Esophagus muscularis mucosa (tissue), 4 donors: ENCODE measurements at regions of chrX and their contacts with region 1.

Region 1: GRCh38 chrX:15789979-15790768 is at the start of gene ZRSR2:
- DNase-seq: peak; percentile 94
- H3K4me3 ChIP-seq: peak within 1 kb of the TSS; percentile 62 to 82 (median 76)
- H3K27ac ChIP-seq: peak within 1 kb of the TSS; percentile 81 to 85 (median 82)
- H3K4me1 ChIP-seq: peaks cover 18 to 30% (median 23%) of the 10 kb centered on the region in 4 donors
- H3K27me3 ChIP-seq: no peaks in the 10 kb centered on the region
- CTCF ChIP-seq: no peak
- EP300 ChIP-seq: no peak
- POLR2A ChIP-seq: peak; percentile 31
- total RNA-seq, gene ZRSR2: 7.0 to 12.4 (median 9.0) TPM

Region 2: GRCh38 chrX:15674841-15675489 is 115.2 kb before region 1 on chrX:
- intact Hi-C with region 1: loop called (anchors 5 kb)
- DNase-seq: peak; percentile 96
- H3K4me3 ChIP-seq: peak overlapping the region; percentile 60 to 88 (median 79)
- H3K27ac ChIP-seq: peak overlapping the region; percentile 92 to 99 (median 94)
- H3K4me1 ChIP-seq: peaks cover 14 to 29% (median 17%) of the 10 kb centered on the region in 4 donors
- H3K27me3 ChIP-seq: no peaks in the 10 kb centered on the region
- CTCF ChIP-seq: no peak
- EP300 ChIP-seq: no peak
- POLR2A ChIP-seq: peak; percentile 59

Region 3: GRCh38 chrX:15854712-15855567 is 64.8 kb after region 1 on chrX and contains the start of gene AP1S2:
- intact Hi-C with region 1: loop called (anchors 5 kb)
- DNase-seq: peak; percentile 94
- H3K4me3 ChIP-seq: peak within 1 kb of the TSS; percentile 75 to 93 (median 80)
- H3K27ac ChIP-seq: peak within 1 kb of the TSS; percentile 88 to 96 (median 95)
- H3K4me1 ChIP-seq: peaks cover 12 to 41% (median 28%) of the 10 kb centered on the region in 4 donors
- H3K27me3 ChIP-seq: no peaks in the 10 kb centered on the region
- CTCF ChIP-seq: no peak
- EP300 ChIP-seq: no peak
- POLR2A ChIP-seq: peak; percentile 55
- total RNA-seq, gene AP1S2: 136 to 142 (median 140) TPM